H1 (cell line): ENCODE measurements at regions of chr7 and their contacts with region 1.

Region 1: DNA sequence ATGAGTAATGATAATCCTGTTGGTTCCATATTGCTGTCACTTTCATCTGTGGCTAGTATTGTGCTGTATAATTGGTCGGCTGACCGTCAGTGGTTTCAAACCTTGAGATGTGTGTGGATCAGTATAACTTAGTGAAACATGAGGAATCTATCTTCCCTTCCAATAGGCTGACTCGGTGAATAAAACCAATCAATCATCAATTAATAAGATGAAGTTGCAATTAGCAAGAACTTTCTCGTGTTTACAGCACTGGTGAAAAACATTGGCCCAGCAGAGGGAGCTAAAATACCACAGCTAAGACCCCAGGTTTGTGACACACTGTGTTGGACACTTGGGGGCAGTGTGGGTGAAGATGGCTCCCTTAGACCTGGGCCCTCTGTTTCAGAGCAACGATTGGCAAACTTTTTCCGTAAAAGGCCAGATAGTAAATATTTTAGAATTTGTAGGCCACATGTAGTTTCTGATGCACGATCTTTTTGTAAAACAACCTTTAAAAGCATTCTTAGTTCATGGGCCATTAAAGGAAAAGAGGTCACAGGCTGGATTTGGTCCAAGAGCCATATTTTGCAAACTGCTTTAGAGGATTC is 47.8 kb downstream of the STRA8 start:
- DNase-seq: peak; percentile 36 to 83
- H3K4me3 ChIP-seq: no peak overlapping the region
- H3K27ac ChIP-seq: no peak overlapping the region
- H3K4me1 ChIP-seq: no peaks in the 10 kb centered on the region
- H3K27me3 ChIP-seq: no peaks in the 10 kb centered on the region
- CTCF ChIP-seq: peak; percentile 80 to 100 (median 99)
- EP300 ChIP-seq: no peak
- POLR2A ChIP-seq: no peak
- RAD21 ChIP-seq: peak; percentile 100

Region 2: GRCh38 chr7:135291809-135292253 is 10.4 kb after region 1 on chr7:
- CTCF ChIA-PET with region 1: interaction called, 20 read pairs
- POLR2A ChIA-PET with region 1: no interaction called
- DNase-seq: no peak
- H3K4me3 ChIP-seq: no peak overlapping the region
- H3K27ac ChIP-seq: no peak overlapping the region
- H3K4me1 ChIP-seq: no peaks in the 10 kb centered on the region
- H3K27me3 ChIP-seq: no peaks in the 10 kb centered on the region
- CTCF ChIP-seq: no peak
- EP300 ChIP-seq: no peak
- POLR2A ChIP-seq: no peak
- RAD21 ChIP-seq: no peak

Region 3: GRCh38 chr7:135308583-135309327 is 27.3 kb after region 1 on chr7:
- CTCF ChIA-PET with region 1: interaction called, 42 read pairs
- POLR2A ChIA-PET with region 1: no interaction called
- DNase-seq: no peak
- H3K4me3 ChIP-seq: no peak overlapping the region
- H3K27ac ChIP-seq: no peak overlapping the region
- H3K4me1 ChIP-seq: peaks cover 0 to 3% (median 0%) of the 10 kb centered on the region in 4 experiments; a peak in 1 of 7 replicates
- H3K27me3 ChIP-seq: no peaks in the 10 kb centered on the region
- CTCF ChIP-seq: no peak
- EP300 ChIP-seq: no peak
- POLR2A ChIP-seq: no peak
- RAD21 ChIP-seq: no peak

Region 4: DNA sequence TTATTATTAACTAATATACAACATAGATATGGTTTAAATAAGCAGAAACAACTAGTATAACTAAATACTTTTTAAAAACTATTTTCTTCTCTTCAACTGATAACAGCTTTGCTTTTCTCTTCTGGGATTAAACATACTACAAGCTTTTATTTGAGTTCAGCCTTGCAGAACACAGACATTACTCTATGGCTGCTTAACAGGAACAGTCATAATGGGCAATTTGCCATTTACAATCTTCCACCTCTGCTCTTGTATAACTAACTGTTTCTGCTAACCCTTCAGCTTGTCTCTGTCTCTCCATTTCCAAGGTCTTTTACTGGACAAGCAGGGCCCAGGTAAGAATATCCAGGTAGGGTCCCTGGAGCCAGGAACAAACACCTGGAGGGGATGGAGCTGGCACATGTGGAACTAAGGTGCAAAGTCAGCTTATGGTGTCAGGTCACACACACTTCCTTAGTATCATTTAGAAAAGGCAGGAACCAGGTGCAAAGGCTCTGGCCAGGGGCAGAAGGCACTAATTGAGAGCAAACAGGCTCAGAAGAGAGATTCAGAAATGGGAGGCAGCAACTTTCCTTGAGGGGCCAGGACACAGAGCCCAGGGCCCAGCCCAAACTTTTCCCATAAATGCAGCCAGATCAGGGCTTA is 45.3 kb after region 1 on chr7:
- CTCF ChIA-PET with region 1: interaction called, 49 read pairs
- POLR2A ChIA-PET with region 1: no interaction called
- DNase-seq: no peak
- H3K4me3 ChIP-seq: no peak overlapping the region
- H3K27ac ChIP-seq: no peak overlapping the region
- H3K4me1 ChIP-seq: no peaks in the 10 kb centered on the region
- H3K27me3 ChIP-seq: no peaks in the 10 kb centered on the region
- CTCF ChIP-seq: no peak
- EP300 ChIP-seq: no peak
- POLR2A ChIP-seq: no peak
- RAD21 ChIP-seq: no peak

Region 5: GRCh38 chr7:135342887-135343286 is 61.4 kb after region 1 on chr7:
- CTCF ChIA-PET with region 1: interaction called, 171 read pairs
- POLR2A ChIA-PET with region 1: no interaction called
- DNase-seq: no peak
- H3K4me3 ChIP-seq: no peak overlapping the region
- H3K27ac ChIP-seq: no peak overlapping the region
- H3K4me1 ChIP-seq: no peaks in the 10 kb centered on the region; a peak in 1 of 7 replicates
- H3K27me3 ChIP-seq: no peaks in the 10 kb centered on the region
- CTCF ChIP-seq: no peak
- EP300 ChIP-seq: no peak
- POLR2A ChIP-seq: no peak
- RAD21 ChIP-seq: no peak

Region 6: DNA sequence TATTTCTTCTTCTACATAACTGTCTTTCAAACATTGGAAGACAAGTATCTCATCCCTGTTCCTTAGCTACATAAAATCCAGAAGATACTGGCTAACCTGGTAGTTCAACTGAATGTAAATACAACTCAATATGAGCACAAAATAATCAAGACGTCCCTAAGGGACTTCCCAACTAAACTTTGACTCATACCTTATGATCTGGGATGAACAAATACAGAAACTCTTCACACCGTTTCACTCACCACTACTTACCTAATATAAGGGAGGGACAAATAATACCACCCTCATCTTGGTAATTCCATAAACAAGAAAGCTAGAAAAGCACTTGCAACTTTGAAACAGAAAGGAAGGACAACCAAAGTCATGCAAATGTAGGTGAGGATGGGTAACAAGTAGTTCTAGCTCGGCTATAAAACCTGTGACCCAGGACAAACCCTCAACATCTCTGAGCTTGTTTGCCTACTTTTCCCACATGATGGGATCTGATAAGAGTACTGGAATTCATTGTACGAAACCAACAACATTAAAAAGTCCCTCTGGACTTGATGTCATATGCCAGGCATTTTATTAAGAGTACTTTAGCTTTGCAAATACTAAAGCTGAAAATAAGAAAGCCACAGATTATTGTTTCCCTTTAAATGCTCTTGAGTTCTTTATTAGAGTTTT is 74.1 kb after region 1 on chr7:
- CTCF ChIA-PET with region 1: interaction called, 61 read pairs
- POLR2A ChIA-PET with region 1: no interaction called
- DNase-seq: no peak
- H3K4me3 ChIP-seq: no peak overlapping the region
- H3K27ac ChIP-seq: no peak overlapping the region
- H3K4me1 ChIP-seq: no peaks in the 10 kb centered on the region
- H3K27me3 ChIP-seq: no peaks in the 10 kb centered on the region
- CTCF ChIP-seq: no peak
- EP300 ChIP-seq: no peak
- POLR2A ChIP-seq: no peak
- RAD21 ChIP-seq: no peak